Dorsolateral prefrontal cortex (tissue), 120 donors: ENCODE measurements at regions of chr5 and their contacts with region 1.

Region 1: GRCh38 chr5:68653471-68653870 is 437.9 kb downstream of the PIK3R1 start:
- DNase-seq: no peak
- H3K4me3 ChIP-seq: no peak overlapping the region
- H3K27ac ChIP-seq: no peak overlapping the region
- H3K27me3 ChIP-seq: no peaks in the 10 kb centered on the region
- CTCF ChIP-seq: no peak

Region 2: DNA sequence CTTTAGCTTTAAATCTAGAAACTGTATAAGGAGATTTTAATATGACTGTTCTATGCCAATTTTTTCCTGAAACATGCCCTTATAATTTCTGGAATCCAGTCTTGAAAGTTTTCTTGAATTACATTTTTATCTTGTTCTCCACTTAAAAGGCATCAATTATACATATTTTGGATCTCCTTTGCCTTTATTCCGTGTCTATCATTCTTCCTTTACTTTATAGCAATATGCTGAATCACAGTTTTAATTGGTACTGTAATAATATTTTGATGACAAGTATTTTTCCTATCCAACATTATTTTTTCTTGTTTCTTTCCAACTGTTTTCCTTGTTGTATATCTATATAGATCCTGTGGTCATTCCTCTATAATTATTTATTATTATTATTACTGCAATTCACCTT is 76.7 kb before region 1 on chr5:
- intact Hi-C with region 1: no loop called
- DNase-seq: no peak
- H3K4me3 ChIP-seq: no peak overlapping the region
- H3K27ac ChIP-seq: no peak overlapping the region
- H3K27me3 ChIP-seq: no peaks in the 10 kb centered on the region
- CTCF ChIP-seq: no peak

Region 3: GRCh38 chr5:68673823-68674180 is 20.3 kb after region 1 on chr5:
- intact Hi-C with region 1: loop called in 1 of 2 experiments (anchors 1 kb)
- DNase-seq: no peak
- H3K4me3 ChIP-seq: peak overlapping the region in 10 of 59 donors; percentile 13 to 53 (median 48)
- H3K27ac ChIP-seq: no peak overlapping the region
- H3K27me3 ChIP-seq: no peaks in the 10 kb centered on the region
- CTCF ChIP-seq: no peak

Region 4: DNA sequence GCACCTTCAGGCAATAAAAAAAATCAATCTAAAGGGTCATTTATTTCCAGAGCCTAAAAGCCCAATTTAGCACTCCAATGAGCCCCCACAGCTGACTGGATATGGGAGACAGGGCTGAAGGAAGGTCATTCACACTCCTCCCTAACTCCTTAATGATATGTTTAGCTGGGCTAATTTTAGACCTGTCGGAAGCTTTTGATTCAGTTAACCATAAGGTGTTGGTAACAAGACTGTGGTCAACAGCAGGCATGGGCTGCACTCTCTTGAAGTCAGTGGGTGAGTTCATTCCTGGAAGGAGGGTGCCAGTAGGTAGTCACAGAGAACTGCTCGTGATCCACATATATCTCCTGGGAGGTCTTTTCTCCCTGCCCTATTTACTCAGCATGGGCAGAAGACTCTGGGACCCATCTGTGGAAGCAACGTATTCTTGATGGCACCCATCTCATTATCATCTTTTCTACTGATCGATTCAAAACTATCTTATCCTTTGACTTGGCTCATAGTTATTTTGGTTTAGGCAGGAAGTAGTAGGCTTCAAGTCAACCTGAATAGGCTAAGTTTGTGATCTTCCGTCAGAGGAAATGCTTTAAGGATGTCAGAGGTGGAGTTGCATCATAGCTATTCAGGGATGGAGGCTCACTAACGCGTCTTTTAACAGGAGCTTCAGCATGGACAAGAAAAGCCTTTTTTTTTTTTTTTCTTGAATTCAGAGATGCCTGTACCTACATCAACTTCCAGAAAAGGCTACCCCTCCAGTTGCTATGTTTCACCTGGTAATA is 72.6 kb after region 1 on chr5:
- intact Hi-C with region 1: no loop called
- DNase-seq: no peak
- H3K4me3 ChIP-seq: no peak overlapping the region
- H3K27ac ChIP-seq: peak overlapping the region in 44 of 59 donors; percentile 3 to 96 (median 72)
- H3K27me3 ChIP-seq: no peaks in the 10 kb centered on the region
- CTCF ChIP-seq: no peak